ENCODE measurements at regions of chr4 and their contacts with region 1.

Region 1: GRCh38 chr4:82275431-82276331 is 98.1 kb downstream of the HNRNPD start:
- DNase-seq: no peak
- ATAC-seq: no peak
- H3K4me3 ChIP-seq: no peak overlapping the region
- H3K27ac ChIP-seq: no peak overlapping the region
- H3K4me1 ChIP-seq: no peaks in the 10 kb centered on the region
- H3K27me3 ChIP-seq: peaks cover 0 to 5% (median 0%) of the 10 kb centered on the region in 7 donors
- CTCF ChIP-seq: no peak

Region 2: DNA sequence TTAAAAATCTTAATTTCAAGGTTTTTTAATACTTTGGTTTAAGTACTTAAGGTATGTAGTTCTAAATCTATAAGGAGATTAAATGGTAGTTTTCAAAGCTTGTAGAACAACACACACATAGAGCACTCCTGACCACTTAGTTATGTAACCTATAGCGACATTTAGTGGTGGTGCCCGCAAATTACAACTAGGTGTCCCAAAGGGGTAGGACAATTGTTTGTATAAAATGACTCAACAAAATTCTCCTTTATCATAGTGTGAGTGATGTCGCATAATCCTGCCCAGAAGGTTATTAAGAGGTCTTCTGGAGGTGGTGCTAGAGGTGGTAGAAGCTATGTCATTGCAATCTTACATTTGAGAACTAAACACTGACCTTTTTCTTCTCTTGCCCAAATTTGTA is 431.0 kb before region 1 on chr4:
- intact Hi-C with region 1: loop called in 1 of 10 experiments (anchors 10 kb)
- DNase-seq: peak in 1 of 2 donors; percentile 69
- ATAC-seq: peak; percentile 71 to 92 (median 87)
- H3K4me3 ChIP-seq: no peak overlapping the region
- H3K27ac ChIP-seq: no peak overlapping the region
- H3K4me1 ChIP-seq: peaks cover 0 to 10% (median 0%) of the 10 kb centered on the region in 9 donors
- H3K27me3 ChIP-seq: no peaks in the 10 kb centered on the region
- CTCF ChIP-seq: peak; percentile 62 to 90 (median 81)